PC-3 (cell line): ENCODE measurements at regions of chr14 and their contacts with region 1.

Region 1: GRCh38 chr14:35374273-35374681 is 30.3 kb downstream of the NFKBIA start:
- DNase-seq: peak; percentile 84
- ATAC-seq: peak; percentile 30; the same call in 1 of the 2 replicates
- H3K4me3 ChIP-seq: no peak overlapping the region
- H3K27ac ChIP-seq: peak overlapping the region; percentile 15
- H3K4me1 ChIP-seq: peaks cover 20% of the 10 kb centered on the region
- H3K27me3 ChIP-seq: no peaks in the 10 kb centered on the region
- CTCF ChIP-seq: no peak

Region 2: DNA sequence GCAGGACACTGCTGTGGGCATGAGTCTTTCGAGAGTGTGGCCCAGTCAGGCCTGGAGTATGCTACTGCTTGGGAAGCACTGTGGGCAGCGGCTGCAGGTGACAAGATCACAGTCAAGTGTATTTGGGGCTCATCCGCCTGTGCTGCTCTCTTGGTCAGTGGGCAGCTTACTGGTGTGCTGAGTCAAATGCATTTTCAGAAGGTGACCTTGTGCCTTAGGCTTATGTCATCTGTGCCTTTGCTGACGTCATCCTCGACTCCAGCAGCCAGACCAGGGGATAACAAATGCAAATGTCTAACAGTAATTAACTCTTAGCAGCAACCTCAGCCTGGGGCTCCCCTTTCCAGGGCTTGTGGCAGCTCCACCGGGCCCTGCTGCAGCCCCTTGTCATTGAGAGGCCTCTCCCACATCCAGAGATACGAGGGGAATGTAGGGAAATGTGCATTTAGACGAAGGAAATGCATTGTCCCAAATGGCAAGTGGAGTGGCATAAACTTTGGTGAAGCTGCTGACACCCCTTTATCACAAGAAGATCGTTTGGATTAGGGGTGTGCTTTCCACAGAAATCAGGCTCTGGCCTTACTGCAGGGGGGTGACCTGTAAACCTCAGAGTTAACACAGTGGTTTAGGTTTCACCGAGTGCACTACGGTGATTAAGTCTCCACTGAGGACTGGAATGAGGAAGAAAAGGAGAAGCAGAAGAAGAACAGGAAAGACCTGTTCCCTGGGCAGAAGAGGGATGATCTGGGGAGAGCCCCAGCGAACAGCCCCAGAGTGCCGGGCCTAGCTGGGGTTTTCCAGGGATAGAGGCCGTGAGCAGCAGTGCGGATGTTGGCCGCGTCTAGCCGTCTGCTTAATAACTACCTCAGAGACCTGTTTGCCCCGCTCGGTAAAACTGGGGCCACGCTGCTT is 42.4 kb before region 1 on chr14:
- CTCF ChIA-PET with region 1: interaction called, 3 read pairs
- POLR2A ChIA-PET with region 1: interaction called, 3 read pairs
- intact Hi-C with region 1: loop called (anchors 5 kb)
- DNase-seq: peak; percentile 93
- ATAC-seq: peak; percentile 68
- H3K4me3 ChIP-seq: 0 out of 2 replicates have a peak overlapping the region, but pooled peaks have one; percentile 14
- H3K27ac ChIP-seq: peak overlapping the region; percentile 76
- H3K4me1 ChIP-seq: peaks cover 44% of the 10 kb centered on the region
- H3K27me3 ChIP-seq: no peaks in the 10 kb centered on the region
- CTCF ChIP-seq: no peak